IMR-90 (cell line): ENCODE measurements at regions of chr2 and their contacts with region 1.

Region 1: GRCh38 chr2:27095745-27096651 is 9.4 kb downstream of the KHK start:
- DNase-seq: peak; percentile 57
- ATAC-seq: peak; percentile 88
- H3K4me3 ChIP-seq: no peak overlapping the region
- H3K27ac ChIP-seq: no peak overlapping the region
- H3K4me1 ChIP-seq: 0 out of 2 replicates have a peak, but pooled peaks cover 3% of the 10 kb centered on the region
- H3K27me3 ChIP-seq: peaks cover 2% of the 10 kb centered on the region; the same call in 1 of the 2 replicates
- CTCF ChIP-seq: no peak
- POLR2A ChIP-seq: no peak
- RAD21 ChIP-seq: no peak

Region 2: DNA sequence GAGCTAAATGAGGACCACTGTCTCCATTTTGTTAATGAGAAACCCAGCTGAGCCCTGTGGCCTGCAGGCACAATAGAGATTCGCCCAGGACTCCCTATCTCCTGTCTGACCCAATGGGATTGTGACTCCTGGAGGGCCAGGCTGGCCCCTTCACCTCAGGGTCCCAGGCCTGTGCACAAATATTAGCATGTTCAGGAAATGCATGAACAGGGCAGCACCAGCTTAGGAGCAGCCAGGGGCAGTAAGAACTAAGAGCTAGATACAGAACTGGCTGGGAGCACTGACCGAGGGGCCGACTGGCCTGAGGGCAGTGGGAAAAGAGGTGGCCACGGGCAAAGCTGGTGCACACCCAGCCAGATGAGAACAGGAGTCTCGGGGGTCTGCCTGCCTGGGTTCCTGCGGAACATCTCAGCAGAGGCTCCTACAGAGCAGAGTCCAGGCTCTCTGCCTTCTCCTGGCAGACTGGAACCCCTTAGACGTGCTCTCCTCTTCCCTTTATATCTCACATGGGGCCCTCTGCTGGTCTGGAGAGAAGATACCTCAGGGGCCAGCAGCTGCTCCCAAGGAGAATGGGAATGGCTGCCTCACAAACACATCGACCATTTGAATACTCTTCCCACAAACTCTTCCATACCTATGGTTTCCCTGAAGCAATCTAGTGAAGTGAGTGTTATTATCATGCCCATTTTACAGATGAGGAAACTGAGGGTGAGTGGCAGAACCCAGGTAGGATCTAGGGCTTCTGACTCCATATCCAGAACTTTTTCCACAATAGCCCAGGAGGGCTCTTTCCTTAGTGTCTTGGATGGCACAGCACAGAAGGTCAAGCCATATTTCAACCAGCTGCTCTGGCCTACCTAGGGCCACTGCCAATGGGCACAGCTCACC is 540.5 kb before region 1 on chr2:
- CTCF ChIA-PET with region 1: no interaction called
- POLR2A ChIA-PET with region 1: no interaction called
- dilution Hi-C with region 1: no loop called
- in situ Hi-C with region 1: no loop called
- intact Hi-C with region 1: no loop called
- DNase-seq: no peak
- ATAC-seq: no peak
- H3K4me3 ChIP-seq: no peak overlapping the region
- H3K27ac ChIP-seq: no peak overlapping the region
- H3K4me1 ChIP-seq: no peaks in the 10 kb centered on the region
- H3K27me3 ChIP-seq: peaks cover 72% of the 10 kb centered on the region
- CTCF ChIP-seq: no peak
- POLR2A ChIP-seq: no peak
- RAD21 ChIP-seq: no peak

Region 3: GRCh38 chr2:27191053-27191829 is 95.2 kb after region 1 on chr2:
- CTCF ChIA-PET with region 1: interaction called, 7 read pairs
- POLR2A ChIA-PET with region 1: no interaction called
- dilution Hi-C with region 1: no loop called
- in situ Hi-C with region 1: loop called (anchors 5 kb)
- intact Hi-C with region 1: loop called (anchors 1 kb)
- DNase-seq: peak; percentile 71
- ATAC-seq: peak; percentile 99
- H3K4me3 ChIP-seq: no peak overlapping the region
- H3K27ac ChIP-seq: no peak overlapping the region
- H3K4me1 ChIP-seq: peaks cover 2% of the 10 kb centered on the region; the same call in 1 of the 2 replicates
- H3K27me3 ChIP-seq: peaks cover 18% of the 10 kb centered on the region
- CTCF ChIP-seq: peak; percentile 83
- POLR2A ChIP-seq: no peak
- RAD21 ChIP-seq: peak; percentile 84

Region 4: DNA sequence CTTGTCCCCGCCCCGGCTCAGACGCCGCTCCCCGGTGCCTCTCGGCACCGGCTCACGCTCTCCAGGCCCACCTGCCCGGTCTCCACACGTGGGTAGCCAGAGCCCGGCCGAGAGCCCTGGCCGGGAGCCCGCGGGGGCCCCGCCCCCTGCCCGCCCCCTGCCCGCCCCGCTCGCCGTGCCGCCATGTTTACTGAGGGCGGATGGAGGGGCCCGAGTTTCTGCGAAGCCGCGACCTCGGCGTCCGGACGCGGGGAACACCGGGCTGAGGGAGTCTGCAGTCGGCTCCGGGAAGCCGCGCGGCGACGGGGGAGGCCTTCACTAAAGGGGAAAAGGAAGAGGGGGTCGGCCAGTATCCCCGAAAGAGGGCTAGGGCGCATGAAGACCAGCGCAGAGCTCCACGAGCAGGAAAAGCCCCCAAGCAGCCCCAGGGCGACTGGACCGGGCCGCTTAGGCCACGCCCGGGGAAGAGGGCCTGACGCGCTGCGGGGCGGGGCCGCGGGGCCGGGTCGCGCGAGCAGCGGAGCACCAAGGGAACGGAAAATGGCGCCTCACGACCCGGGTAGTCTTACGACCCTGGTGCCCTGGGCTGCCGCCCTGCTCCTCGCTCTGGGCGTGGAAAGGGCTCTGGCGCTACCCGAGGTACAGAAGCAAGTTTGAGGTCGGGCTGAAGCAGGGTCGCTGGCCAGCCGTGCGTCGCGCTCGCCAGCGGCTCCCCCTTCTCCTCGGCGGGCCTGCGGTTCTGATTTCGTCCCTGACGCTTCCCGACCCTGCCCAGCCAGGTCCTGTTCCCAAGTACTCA is 116.0 kb after region 1 on chr2 and contains the starts of genes ATRAID and SLC5A6:
- CTCF ChIA-PET with region 1: no interaction called
- POLR2A ChIA-PET with region 1: no interaction called
- dilution Hi-C with region 1: no loop called
- in situ Hi-C with region 1: no loop called
- intact Hi-C with region 1: loop called (anchors 1 kb)
- DNase-seq: peak; percentile 81
- ATAC-seq: peak; percentile 96
- H3K4me3 ChIP-seq: peak within 1 kb of the TSS; percentile 96
- H3K27ac ChIP-seq: peak within 1 kb of the TSS; percentile 99
- H3K4me1 ChIP-seq: peaks cover 8% of the 10 kb centered on the region
- H3K27me3 ChIP-seq: no peaks in the 10 kb centered on the region
- CTCF ChIP-seq: no peak
- POLR2A ChIP-seq: peak; percentile 89
- RAD21 ChIP-seq: no peak
- total RNA-seq, gene ATRAID: 138 and 144 TPM in 2 replicates
- total RNA-seq, gene SLC5A6: 34.2 and 38.6 TPM in 2 replicates

Region 5: DNA sequence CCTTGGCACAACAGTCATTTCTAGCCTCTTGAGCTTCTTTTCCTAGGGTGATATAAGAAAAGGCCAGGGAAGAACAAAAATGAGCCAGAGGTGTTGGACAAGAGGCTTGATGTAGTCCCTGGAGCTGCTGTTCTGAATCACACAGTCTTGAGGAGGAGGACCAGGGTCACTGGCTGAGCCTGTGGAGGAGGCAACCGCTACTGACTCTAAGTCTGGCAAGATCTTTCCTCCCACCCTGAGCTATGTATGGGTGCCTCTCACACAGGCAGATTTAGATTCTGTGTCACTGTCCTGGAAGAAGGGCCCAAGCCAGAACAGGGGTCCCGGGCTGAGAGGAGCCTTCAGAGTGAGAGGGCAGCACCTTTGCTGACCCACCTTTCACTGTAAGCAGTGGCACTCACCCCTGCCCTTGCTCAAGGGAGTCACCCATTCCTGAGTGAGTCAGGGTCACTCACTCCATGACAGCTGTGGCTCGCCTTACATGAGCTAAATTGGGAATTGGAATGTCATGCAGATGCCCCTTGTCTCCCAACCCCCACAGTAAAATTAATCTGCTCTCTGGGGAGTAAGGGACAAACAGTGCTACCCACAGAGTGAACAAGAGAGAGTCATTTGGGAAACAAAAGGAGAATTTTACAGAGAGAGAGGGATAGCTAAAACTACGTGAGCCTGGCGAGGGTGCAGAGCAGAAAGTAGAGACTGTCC is 186.0 kb after region 1 on chr2 and contains the start of gene TRIM54:
- CTCF ChIA-PET with region 1: interaction called, 3 read pairs
- POLR2A ChIA-PET with region 1: no interaction called
- dilution Hi-C with region 1: no loop called
- in situ Hi-C with region 1: loop called (anchors 5 kb)
- intact Hi-C with region 1: loop called (anchors 2 kb)
- DNase-seq: peak; percentile 33
- ATAC-seq: 0 out of 2 replicates have a peak, but pooled peaks have one; percentile 13
- H3K4me3 ChIP-seq: no peak within 1 kb of the TSS
- H3K27ac ChIP-seq: no peak within 1 kb of the TSS
- H3K4me1 ChIP-seq: peaks cover 29% of the 10 kb centered on the region
- H3K27me3 ChIP-seq: peaks cover 10% of the 10 kb centered on the region
- CTCF ChIP-seq: no peak
- POLR2A ChIP-seq: no peak
- RAD21 ChIP-seq: no peak
- total RNA-seq, gene TRIM54: under 0.01 TPM in 1 of 2 replicates, not detected in the other

Region 6: GRCh38 chr2:27291865-27292264 is 195.9 kb after region 1 on chr2:
- CTCF ChIA-PET with region 1: no interaction called
- POLR2A ChIA-PET with region 1: interaction called, 13 read pairs
- dilution Hi-C with region 1: no loop called
- in situ Hi-C with region 1: no loop called
- intact Hi-C with region 1: no loop called
- DNase-seq: no peak
- ATAC-seq: no peak
- H3K4me3 ChIP-seq: no peak overlapping the region
- H3K27ac ChIP-seq: no peak overlapping the region
- H3K4me1 ChIP-seq: peaks cover 11% of the 10 kb centered on the region
- H3K27me3 ChIP-seq: peaks cover 8% of the 10 kb centered on the region
- CTCF ChIP-seq: no peak; the same call in 1 of the 2 replicates
- POLR2A ChIP-seq: no peak
- RAD21 ChIP-seq: no peak

Region 7: DNA sequence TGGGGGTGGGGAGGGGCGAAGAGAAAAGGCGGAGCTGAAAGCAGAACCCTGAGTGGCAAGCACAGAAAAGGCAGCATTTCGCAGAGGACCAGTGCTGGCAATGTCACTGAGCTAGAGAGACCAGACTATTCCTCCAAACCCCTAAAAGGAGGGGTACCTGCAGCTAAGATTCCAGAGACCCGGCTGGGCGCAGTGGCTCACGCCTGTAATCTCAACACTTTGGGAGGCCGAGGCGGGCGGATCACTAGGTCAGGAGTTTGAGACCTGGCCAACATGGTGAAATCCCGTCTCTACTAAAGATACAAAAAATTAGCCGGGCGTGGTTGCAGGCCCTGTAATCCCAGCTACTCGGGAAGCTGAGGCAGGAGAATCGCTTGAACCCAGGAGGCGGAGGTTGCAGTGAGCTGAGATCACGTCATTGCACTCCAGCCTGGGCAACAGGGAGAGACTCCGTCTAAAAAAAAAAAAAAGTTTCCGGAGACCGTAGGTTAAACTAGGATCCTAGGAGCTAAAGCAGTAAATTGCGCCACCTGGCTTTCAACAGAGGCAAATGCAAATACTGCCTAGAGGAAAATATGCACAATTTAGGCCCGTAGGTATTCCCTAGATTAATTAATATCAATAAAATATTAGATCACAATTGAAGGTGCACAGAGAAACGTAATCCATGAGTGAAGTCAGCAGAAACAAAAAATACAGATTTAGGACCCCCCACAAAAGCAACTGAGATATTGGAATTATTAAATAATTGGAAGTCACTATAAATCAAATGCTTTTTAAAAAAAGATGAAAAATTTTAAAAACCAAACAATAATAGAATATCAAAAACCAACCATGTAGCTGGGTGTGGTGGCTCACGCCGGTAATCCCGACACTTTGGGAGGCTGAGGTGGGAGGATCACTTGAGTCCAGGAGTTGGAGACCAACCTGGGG is 207.4 kb after region 1 on chr2:
- CTCF ChIA-PET with region 1: interaction called, 4 read pairs
- POLR2A ChIA-PET with region 1: no interaction called
- dilution Hi-C with region 1: no loop called
- in situ Hi-C with region 1: no loop called
- intact Hi-C with region 1: loop called (anchors 1 kb)
- DNase-seq: peak; percentile 72
- ATAC-seq: peak; percentile 69
- H3K4me3 ChIP-seq: no peak overlapping the region
- H3K27ac ChIP-seq: no peak overlapping the region
- H3K4me1 ChIP-seq: no peaks in the 10 kb centered on the region; the same call in 1 of the 2 replicates
- H3K27me3 ChIP-seq: peaks cover 39% of the 10 kb centered on the region
- CTCF ChIP-seq: peak; percentile 92
- POLR2A ChIP-seq: no peak
- RAD21 ChIP-seq: peak; percentile 82